Activated CD4-positive, alpha-beta T cell treated with anti-CD3 and anti-CD28 coated beads for 36 hours (primary cell): ENCODE measurements at regions of chr10 and their contacts with region 1.

Region 1: DNA sequence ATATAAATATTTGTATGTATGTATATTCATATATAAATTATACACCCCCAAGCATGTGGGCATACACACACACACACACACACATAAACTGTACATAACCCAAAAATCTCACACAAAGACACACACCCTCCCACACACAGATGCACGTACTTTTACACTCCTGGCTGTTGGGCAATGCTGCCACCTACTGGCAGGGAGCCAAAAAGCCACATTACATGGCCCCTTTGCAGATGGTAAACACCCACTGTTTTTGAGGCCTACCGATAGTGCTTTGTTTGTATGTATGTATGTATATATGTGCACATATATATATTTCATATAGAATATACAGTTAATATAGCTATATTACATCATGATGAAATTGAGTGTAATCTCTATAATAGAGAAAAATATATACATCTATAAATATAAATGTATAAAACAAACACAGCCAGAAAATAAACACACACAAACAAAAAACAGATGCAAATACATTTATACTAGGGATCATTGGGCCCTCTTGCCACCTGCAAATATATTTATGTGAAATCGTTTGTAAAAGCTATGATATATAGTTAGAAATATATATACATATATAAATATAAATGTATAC is 120.1 kb upstream of the ACBD5 start:
- DNase-seq: peak; percentile 91
- ATAC-seq: peak; percentile 96
- H3K4me3 Mint-ChIP-seq: no peak overlapping the region
- H3K27ac Mint-ChIP-seq: no peak overlapping the region
- H3K4me1 Mint-ChIP-seq: peaks cover 3% of the 10 kb centered on the region
- H3K27me3 Mint-ChIP-seq: no peaks in the 10 kb centered on the region

Region 2: DNA sequence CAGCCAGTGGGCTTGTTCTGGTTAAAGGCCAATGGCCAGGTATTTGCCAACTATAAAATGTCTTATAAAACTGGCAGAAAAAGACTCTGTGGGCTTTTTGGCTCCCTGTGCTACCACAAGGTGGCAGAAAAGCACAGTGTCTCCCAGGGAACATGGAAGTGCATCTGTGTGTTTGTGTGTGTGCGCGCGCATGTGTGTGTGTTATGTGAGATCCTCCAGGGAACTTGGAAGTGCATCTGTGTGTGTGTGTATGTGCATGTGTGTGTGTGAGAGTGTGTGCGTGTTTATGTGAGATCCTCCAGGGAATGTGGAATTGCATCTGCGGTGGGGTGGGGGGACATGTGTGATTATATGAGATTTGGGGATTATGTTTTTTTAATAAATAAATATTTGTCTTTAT is 469.7 kb before region 1 on chr10:
- CTCF ChIA-PET with region 1: no interaction called
- POLR2A ChIA-PET with region 1: no interaction called
- intact Hi-C with region 1: loop called in 1 of 2 experiments (anchors 1 kb)
- DNase-seq: peak; percentile 76
- ATAC-seq: peak; percentile 70
- H3K4me3 Mint-ChIP-seq: no peak overlapping the region
- H3K27ac Mint-ChIP-seq: no peak overlapping the region
- H3K4me1 Mint-ChIP-seq: no peaks in the 10 kb centered on the region
- H3K27me3 Mint-ChIP-seq: peaks cover 3% of the 10 kb centered on the region

Region 3: GRCh38 chr10:26969145-26969926 is 391.3 kb before region 1 on chr10:
- CTCF ChIA-PET with region 1: no interaction called
- POLR2A ChIA-PET with region 1: no interaction called
- intact Hi-C with region 1: no loop called
- DNase-seq: peak; percentile 24
- ATAC-seq: peak; percentile 88
- H3K4me3 Mint-ChIP-seq: no peak overlapping the region
- H3K27ac Mint-ChIP-seq: no peak overlapping the region
- H3K4me1 Mint-ChIP-seq: peaks cover 16% of the 10 kb centered on the region
- H3K27me3 Mint-ChIP-seq: no peaks in the 10 kb centered on the region

Region 4: GRCh38 chr10:27252267-27253000 is 108.2 kb before region 1 on chr10:
- CTCF ChIA-PET with region 1: interaction called, 4 read pairs
- POLR2A ChIA-PET with region 1: no interaction called
- intact Hi-C with region 1: loop called in 1 of 2 experiments (anchors 1 kb)
- DNase-seq: peak; percentile 90
- ATAC-seq: peak; percentile 93
- H3K4me3 Mint-ChIP-seq: peak overlapping the region; percentile 72
- H3K27ac Mint-ChIP-seq: peak overlapping the region; percentile 66
- H3K4me1 Mint-ChIP-seq: peaks cover 15% of the 10 kb centered on the region
- H3K27me3 Mint-ChIP-seq: peaks cover 5% of the 10 kb centered on the region